ENCODE measurements at regions of chr5 and their contacts with region 1.

Region 1: GRCh38 chr5:141402553-141403260 is at the start of gene PCDHGA9:
- DNase-seq: peak; percentile 73
- H3K4me3 Mint-ChIP-seq: peak within 1 kb of the TSS; percentile 95
- H3K27ac Mint-ChIP-seq: peak within 1 kb of the TSS; percentile 68
- H3K4me1 Mint-ChIP-seq: peaks cover 17% of the 10 kb centered on the region
- H3K27me3 Mint-ChIP-seq: no peaks in the 10 kb centered on the region
- CTCF ChIP-seq: peak; percentile 83
- total RNA-seq, gene PCDHGA9: 16.0 and 18.1 TPM in 2 replicates

Region 2: GRCh38 chr5:141223112-141223783 is 179.5 kb before region 1 on chr5 and contains the start of gene PCDHB14:
- CTCF ChIA-PET with region 1: interaction called, 9 read pairs
- intact Hi-C with region 1: loop called (anchors 2 kb)
- DNase-seq: peak; percentile 66
- H3K4me3 Mint-ChIP-seq: peak within 1 kb of the TSS; percentile 75
- H3K27ac Mint-ChIP-seq: peak within 1 kb of the TSS; percentile 60
- H3K4me1 Mint-ChIP-seq: no peaks in the 10 kb centered on the region
- H3K27me3 Mint-ChIP-seq: no peaks in the 10 kb centered on the region
- CTCF ChIP-seq: peak; percentile 63
- total RNA-seq, gene PCDHB14: 5.7 and 6.3 TPM in 2 replicates

Measured in Calu3 (cell line).